A673 (cell line): ENCODE measurements at regions of chr9 and their contacts with region 1.

Region 1: GRCh38 chr9:69945671-69946141 is 97.9 kb upstream of the MAMDC2 start:
- DNase-seq: peak; percentile 6
- H3K4me3 ChIP-seq: no peak overlapping the region
- H3K27ac ChIP-seq: no peak overlapping the region
- H3K4me1 ChIP-seq: no peaks in the 10 kb centered on the region
- H3K27me3 ChIP-seq: peaks cover 5% of the 10 kb centered on the region
- CTCF ChIP-seq: no peak

Region 2: GRCh38 chr9:69996967-69997366 is 51.3 kb after region 1 on chr9:
- CTCF ChIA-PET with region 1: no interaction called
- POLR2A ChIA-PET with region 1: no interaction called
- intact Hi-C with region 1: loop called (anchors 5 kb)
- DNase-seq: no peak
- H3K4me3 ChIP-seq: no peak overlapping the region
- H3K27ac ChIP-seq: no peak overlapping the region
- H3K4me1 ChIP-seq: no peaks in the 10 kb centered on the region
- H3K27me3 ChIP-seq: peaks cover 14% of the 10 kb centered on the region
- CTCF ChIP-seq: no peak

Region 3: GRCh38 chr9:70392850-70393249 is 447.1 kb after region 1 on chr9:
- CTCF ChIA-PET with region 1: no interaction called
- POLR2A ChIA-PET with region 1: interaction called, 12 read pairs
- intact Hi-C with region 1: no loop called
- DNase-seq: no peak
- H3K4me3 ChIP-seq: no peak overlapping the region
- H3K27ac ChIP-seq: no peak overlapping the region
- H3K4me1 ChIP-seq: no peaks in the 10 kb centered on the region
- H3K27me3 ChIP-seq: no peaks in the 10 kb centered on the region
- CTCF ChIP-seq: no peak

Region 4: DNA sequence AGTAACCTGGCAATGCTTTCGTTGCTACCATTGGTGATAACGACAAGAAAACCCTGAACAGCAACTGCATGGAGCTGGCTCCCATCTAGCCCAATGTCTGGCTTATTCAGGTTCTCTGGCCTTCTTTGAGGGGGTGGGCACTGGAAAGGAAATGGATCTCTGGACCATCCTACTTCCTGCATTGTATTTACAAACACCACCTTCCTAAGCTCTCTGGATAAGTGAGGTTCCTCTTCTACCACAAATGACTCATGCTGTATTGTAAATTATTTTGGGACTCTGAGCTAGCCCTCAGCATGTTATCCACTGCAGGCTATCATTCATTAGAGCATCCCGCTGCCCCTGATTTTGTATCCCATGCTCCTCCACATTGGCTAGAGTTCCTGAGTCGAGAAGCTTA is 605.7 kb after region 1 on chr9:
- CTCF ChIA-PET with region 1: no interaction called
- POLR2A ChIA-PET with region 1: no interaction called
- intact Hi-C with region 1: no loop called
- DNase-seq: no peak
- H3K4me3 ChIP-seq: no peak overlapping the region
- H3K27ac ChIP-seq: no peak overlapping the region
- H3K4me1 ChIP-seq: no peaks in the 10 kb centered on the region
- H3K27me3 ChIP-seq: no peaks in the 10 kb centered on the region
- CTCF ChIP-seq: no peak